ENCODE measurements at regions of chr9 and their contacts with region 1.

Region 1: GRCh38 chr9:113541019-113541900 is 77.7 kb downstream of the RGS3 start:
- DNase-seq: peak; percentile 30
- H3K4me3 ChIP-seq: no peak overlapping the region
- H3K27ac ChIP-seq: no peak overlapping the region
- H3K4me1 ChIP-seq: no peaks in the 10 kb centered on the region
- H3K27me3 ChIP-seq: no peaks in the 10 kb centered on the region
- CTCF ChIP-seq: no peak

Region 2: DNA sequence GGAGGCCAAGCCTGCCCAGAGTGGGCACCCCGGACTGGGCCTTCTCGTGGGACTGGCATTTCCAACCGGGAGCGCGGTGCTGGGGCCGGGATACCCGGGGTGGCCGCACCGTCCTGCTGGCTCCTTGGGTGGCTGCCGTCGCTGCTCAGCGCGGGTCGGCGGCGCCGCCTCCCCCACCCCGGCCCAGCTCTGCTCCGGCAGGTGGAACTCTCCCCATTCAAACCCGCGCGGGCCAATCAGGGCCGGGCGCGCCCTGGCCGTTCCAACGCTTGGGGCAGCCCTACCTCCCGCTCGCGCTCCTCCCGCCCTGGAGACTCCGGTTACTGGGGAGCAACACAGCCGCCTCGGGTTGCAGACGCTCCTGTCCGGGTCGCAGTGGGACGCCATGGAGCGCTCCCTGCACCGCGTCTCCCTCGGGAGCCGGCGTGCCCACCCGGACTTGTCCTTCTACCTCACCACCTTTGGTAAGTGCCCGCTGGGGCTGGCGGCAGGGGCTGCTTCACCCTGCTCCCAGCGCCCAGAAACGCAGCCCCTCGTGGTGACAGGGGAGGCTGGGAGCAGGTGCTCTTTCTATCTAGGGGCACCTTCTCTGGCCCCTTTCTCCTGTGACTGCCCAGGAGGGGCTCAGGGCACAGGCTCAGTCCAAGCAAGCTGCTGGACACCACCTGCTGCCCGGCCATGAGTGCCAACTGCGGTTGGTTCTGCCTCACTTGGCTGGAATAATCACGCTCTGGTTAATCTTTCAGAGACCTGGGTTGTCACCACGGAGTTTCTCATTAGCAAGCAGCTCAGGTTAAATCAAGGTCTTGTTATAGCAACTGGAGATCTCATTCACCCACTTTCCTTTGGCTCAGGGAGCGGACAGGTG is 77.6 kb before region 1 on chr9 and contains the start of gene RGS3:
- CTCF ChIA-PET with region 1: no interaction called
- dilution Hi-C with region 1: loop called (anchors 5 kb)
- in situ Hi-C with region 1: no loop called
- intact Hi-C with region 1: no loop called
- DNase-seq: peak; percentile 29
- H3K4me3 ChIP-seq: peak within 1 kb of the TSS in 1 of 3 experiments; percentile 32
- H3K27ac ChIP-seq: no peak within 1 kb of the TSS
- H3K4me1 ChIP-seq: peaks cover 8% of the 10 kb centered on the region
- H3K27me3 ChIP-seq: peaks cover 12% of the 10 kb centered on the region
- CTCF ChIP-seq: no peak
- total RNA-seq, gene RGS3: 52.2 to 63.5 TPM

Measured in mammary epithelial cell (primary cell).